ENCODE measurements at regions of chr14 and their contacts with region 1.

Region 1: DNA sequence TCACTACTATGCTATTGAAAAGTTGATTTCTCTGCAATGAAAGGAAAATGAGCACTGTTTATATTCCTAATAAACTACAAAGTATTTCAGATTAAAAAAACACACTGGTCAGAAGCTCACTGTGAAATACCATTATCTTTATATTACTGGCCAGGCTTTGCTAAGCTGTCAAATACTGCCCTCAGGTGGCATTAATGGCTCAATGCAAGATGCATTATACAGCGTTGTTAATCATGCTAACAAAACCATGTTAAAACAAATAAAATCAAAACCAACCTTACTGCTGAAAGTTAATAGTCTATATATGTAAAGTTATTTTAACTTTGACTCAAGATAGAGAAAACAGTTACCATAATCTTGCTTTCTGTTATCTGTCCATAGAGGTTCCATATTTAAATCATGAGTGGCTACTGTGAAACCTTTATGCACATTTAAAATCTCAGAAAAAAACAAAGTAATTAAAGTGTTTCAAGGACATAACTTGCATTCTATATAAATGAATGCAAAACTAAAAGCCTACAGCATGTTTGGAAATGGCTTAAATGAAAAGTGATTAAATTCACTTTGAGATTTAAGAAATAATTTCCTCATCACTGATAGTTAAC is 121.7 kb downstream of the RALGAPA1 start:
- DNase-seq: peak; percentile 62

Region 2: DNA sequence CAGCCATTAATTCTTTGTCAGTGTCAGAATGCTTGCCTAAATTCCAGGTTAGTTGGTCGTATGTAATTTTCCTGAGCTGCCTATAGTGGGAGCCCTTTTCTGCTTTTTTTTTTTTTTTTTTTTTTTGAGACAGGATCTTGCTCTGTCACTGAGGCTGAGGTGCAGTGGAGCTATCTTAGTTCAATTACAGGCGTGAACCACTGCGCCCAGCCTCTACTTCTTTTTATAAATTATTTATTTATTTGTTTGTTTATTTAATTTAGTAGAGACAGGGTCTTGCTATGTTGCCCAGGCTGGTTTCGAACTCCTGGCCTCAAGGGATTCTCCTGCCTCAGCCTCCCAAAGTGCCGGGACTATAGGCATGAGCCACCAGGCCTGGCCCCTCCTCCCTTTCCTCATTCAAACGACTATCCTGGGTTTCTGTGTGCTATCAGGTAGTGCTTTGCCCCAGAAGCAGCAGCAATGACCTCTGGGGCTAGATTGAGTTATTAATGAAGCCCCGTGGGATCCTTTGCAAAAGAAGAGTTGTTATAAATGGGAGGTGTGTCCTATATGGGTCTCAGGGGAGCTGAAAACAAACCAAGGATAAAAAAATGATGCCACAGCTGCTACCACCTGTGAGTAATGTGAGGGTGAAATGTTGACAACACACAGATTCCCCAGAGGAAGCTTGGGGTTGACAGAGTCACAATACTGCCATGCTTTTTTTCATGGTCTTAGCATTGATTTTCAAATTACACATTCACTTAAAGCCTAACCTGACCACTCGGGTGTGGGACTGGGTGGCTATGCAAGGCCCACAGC is 248.3 kb before region 1 on chr14:
- in situ Hi-C with region 1: loop called (anchors 25 kb)
- DNase-seq: peak; percentile 20

Region 3: DNA sequence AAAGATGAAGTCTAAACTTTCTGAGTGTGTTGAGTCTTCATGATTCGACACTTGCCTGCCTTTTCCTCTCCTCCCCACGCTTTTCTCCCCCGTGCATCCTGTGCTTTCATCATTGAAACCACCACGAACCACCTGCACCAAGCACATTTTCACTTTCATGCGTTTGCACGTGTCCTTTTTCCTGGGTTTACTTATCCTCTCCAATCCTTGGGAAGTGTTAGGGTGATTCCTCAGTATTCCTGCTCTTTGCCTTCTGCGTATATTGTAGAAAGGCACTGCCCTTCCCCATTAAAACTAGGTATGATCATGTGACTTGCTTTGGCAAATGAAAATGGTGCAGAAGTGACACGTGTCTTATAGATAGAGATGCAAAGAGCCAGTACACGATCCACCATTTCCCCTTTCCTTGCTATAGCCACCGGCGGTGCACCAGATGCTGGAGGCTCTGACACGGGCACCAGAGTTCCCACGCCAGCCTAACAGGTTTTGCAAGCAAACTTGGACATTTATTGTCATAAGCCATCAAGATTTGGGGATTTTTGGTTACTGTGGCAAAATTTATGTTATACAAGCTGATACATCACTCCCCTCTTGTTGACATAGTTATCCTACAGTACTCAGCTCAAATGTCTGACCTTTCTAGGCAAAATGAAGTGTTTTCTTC is 245.4 kb after region 1 on chr14:
- in situ Hi-C with region 1: no loop called
- DNase-seq: no peak

Measured in ACHN (cell line).